ENCODE measurements at regions of chr9 and their contacts with region 1.

Region 1: GRCh38 chr9:99162759-99163364 is 57.9 kb downstream of the TGFBR1 start:
- DNase-seq: peak; percentile 69
- ATAC-seq: peak; percentile 59
- H3K4me3 ChIP-seq: no peak overlapping the region
- H3K4me3 Mint-ChIP-seq: peak overlapping the region; percentile 27
- H3K27ac ChIP-seq: no peak overlapping the region
- H3K27ac Mint-ChIP-seq: no peak overlapping the region
- H3K4me1 ChIP-seq: peaks cover 8 to 9% of the 10 kb centered on the region in 2 donors
- H3K4me1 Mint-ChIP-seq: peaks cover 37% of the 10 kb centered on the region
- H3K27me3 ChIP-seq: no peaks in the 10 kb centered on the region
- H3K27me3 Mint-ChIP-seq: no peaks in the 10 kb centered on the region
- CTCF ChIP-seq: peak; percentile 82

Region 2: DNA sequence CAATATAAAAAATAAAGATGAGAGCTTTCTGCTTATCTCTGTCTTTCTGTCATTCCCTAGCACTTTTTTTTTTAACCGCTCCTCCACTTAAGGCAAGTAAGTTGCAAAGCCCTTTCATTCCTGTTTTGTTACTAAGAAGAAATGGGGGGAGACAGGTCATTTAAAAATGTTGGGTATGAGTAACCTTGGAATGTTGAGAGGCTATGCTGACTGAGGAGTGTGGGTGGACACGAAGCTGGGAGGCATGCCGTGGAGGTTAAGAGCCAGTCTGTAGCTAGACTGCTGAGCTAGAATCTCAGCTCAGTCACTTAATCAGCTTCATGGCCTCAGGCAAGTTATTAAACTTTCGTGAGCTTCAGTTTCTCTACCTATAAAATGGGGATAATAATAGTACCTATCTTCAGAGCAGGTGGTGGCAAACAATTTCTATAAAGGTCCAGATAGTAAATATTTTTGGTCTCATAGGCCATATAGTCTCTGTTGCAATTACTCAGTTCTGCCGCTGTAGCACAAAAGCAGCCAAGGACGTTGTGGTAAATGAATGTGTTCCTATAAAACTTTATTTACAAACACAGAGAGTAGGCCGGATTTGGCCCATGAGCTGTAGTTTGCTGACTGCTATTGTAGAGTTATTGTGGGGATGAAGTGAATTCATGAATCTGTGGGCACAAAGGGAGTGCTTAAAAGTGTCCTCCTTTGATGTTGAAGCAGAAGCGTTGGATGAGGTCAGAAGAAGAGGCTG is 674.1 kb before region 1 on chr9:
- CTCF ChIA-PET with region 1: no interaction called
- POLR2A ChIA-PET with region 1: no interaction called
- intact Hi-C with region 1: no loop called
- DNase-seq: no peak
- ATAC-seq: no peak
- H3K4me3 ChIP-seq: no peak overlapping the region
- H3K4me3 Mint-ChIP-seq: no peak overlapping the region
- H3K27ac ChIP-seq: no peak overlapping the region
- H3K27ac Mint-ChIP-seq: no peak overlapping the region
- H3K4me1 ChIP-seq: no peaks in the 10 kb centered on the region
- H3K4me1 Mint-ChIP-seq: no peaks in the 10 kb centered on the region
- H3K27me3 ChIP-seq: peaks cover 0 to 11% (median 4%) of the 10 kb centered on the region in 4 experiments
- H3K27me3 Mint-ChIP-seq: peaks cover 30% of the 10 kb centered on the region
- CTCF ChIP-seq: no peak

Region 3: DNA sequence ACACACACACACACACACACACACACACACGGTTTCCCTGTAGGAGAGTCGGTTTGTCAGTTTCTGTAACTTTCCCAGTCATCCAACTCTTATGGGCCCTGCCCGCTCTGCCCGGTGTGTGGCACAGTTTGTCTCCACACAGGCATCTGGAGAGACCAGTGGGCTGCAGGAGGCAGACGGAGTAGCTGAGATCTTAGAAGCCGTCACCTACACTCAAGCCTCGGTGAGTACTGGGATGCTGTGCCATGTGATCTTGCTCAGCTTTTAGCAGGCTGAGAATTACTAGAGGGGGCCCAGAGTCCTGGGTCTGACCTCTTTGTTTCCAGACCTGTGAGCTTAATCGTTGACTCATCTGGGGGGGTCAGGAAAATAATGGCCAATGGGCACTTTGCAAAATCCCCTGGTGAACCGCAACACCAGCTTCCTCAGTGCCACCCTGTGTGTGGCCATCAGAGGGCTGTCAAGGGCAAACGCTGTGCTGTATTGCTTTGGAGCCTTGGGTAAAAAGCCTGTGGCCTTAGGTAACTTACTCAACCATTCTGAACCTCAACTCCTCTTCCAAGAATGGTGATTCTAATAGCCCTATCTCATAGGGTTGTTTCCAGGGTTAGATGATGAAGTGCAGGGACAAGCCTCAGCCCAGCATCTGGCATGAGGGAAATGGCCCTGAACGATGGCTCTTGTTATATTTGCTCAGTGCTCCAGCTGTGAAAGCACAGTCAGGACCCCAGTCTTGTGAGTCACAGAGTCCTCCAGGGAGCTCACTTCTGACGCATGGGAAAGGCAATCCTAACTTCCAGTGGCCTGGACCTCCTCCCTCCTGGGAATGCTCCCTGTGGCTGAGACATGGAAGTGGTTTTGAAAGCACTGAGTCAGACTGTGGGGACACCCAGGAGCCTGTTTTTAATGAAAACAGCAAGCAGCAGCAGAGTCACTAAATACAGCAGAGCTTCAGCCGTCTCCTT is 173.5 kb before region 1 on chr9:
- CTCF ChIA-PET with region 1: no interaction called
- POLR2A ChIA-PET with region 1: no interaction called
- intact Hi-C with region 1: no loop called
- DNase-seq: no peak
- ATAC-seq: no peak
- H3K4me3 ChIP-seq: no peak overlapping the region
- H3K4me3 Mint-ChIP-seq: no peak overlapping the region
- H3K27ac ChIP-seq: no peak overlapping the region
- H3K27ac Mint-ChIP-seq: no peak overlapping the region
- H3K4me1 ChIP-seq: peaks cover 14 to 17% of the 10 kb centered on the region in 2 donors
- H3K4me1 Mint-ChIP-seq: peaks cover 17% of the 10 kb centered on the region
- H3K27me3 ChIP-seq: no peaks in the 10 kb centered on the region
- H3K27me3 Mint-ChIP-seq: no peaks in the 10 kb centered on the region
- CTCF ChIP-seq: no peak

Region 4: DNA sequence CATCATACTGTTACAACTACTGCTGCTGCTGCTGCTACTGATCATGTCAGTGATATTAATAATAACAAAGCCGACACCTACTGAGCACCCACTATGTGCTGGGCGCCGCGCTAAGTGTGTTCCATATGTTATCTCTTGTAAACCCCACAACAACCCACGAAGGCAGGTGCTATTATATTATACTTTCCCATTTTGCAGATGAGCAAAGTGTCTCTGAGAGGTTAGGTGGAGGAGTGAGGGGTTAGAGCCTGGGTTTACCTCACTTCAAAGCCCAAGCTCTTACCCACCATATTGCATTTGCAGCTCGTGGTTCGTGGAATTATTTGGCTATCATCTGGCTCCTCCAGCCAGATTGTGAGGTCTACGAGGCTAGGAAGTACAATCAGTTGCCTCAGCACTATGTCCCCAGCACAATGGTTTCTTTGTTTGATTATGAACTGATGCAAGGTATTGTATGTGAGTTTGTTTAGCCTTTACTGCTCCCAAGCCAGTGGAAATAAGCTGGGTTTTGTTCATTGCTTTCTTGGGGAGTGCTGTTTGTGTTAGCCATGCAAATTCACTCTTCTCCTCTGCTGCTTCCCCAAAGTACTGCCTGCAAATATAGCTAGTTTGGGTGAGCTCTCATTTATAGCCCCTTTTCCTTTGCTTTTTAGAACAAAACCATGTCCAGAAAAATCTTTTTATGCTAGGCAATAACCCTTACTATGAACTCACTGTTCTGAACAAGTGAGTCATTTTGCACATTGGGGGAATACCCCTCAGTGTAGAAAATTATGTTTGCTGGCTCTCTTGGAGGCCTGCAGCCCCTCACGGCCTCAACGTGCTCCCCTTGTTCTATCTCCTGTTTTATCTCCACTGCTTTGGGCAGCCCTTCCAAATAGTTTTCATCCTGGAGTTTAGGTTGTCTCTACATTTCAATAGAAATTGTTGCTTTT is 11.0 kb after region 1 on chr9:
- CTCF ChIA-PET with region 1: interaction called, 41 read pairs
- POLR2A ChIA-PET with region 1: interaction called, 6 read pairs
- intact Hi-C with region 1: no loop called
- DNase-seq: no peak
- ATAC-seq: no peak
- H3K4me3 ChIP-seq: no peak overlapping the region
- H3K4me3 Mint-ChIP-seq: no peak overlapping the region
- H3K27ac ChIP-seq: no peak overlapping the region
- H3K27ac Mint-ChIP-seq: no peak overlapping the region
- H3K4me1 ChIP-seq: peaks cover 3 to 7% of the 10 kb centered on the region in 2 donors
- H3K4me1 Mint-ChIP-seq: peaks cover 29% of the 10 kb centered on the region
- H3K27me3 ChIP-seq: no peaks in the 10 kb centered on the region
- H3K27me3 Mint-ChIP-seq: no peaks in the 10 kb centered on the region
- CTCF ChIP-seq: no peak

Region 5: GRCh38 chr9:99221621-99222415 is 59.0 kb after region 1 on chr9 and contains the starts of genes ALG2 and SEC61B:
- CTCF ChIA-PET with region 1: interaction called, 18 read pairs
- POLR2A ChIA-PET with region 1: no interaction called
- intact Hi-C with region 1: loop called (anchors 10 kb)
- DNase-seq: peak; percentile 98
- ATAC-seq: peak; percentile 89
- H3K4me3 ChIP-seq: peak within 1 kb of the TSS; percentile 88 to 96 (median 90)
- H3K4me3 Mint-ChIP-seq: peak within 1 kb of the TSS; percentile 95
- H3K27ac ChIP-seq: peak within 1 kb of the TSS; percentile 98 to 99
- H3K27ac Mint-ChIP-seq: peak within 1 kb of the TSS; percentile 100
- H3K4me1 ChIP-seq: peaks cover 30 to 43% of the 10 kb centered on the region in 2 donors
- H3K4me1 Mint-ChIP-seq: peaks cover 77% of the 10 kb centered on the region
- H3K27me3 ChIP-seq: no peaks in the 10 kb centered on the region
- H3K27me3 Mint-ChIP-seq: no peaks in the 10 kb centered on the region
- CTCF ChIP-seq: no peak
- total RNA-seq, gene ALG2: 42.6 and 46.3 TPM in 2 replicates
- total RNA-seq, gene SEC61B: 70.2 and 78.2 TPM in 2 replicates

Region 6: GRCh38 chr9:100216178-100216787 is 1053.4 kb after region 1 on chr9:
- CTCF ChIA-PET with region 1: interaction called, 9 read pairs
- POLR2A ChIA-PET with region 1: no interaction called
- intact Hi-C with region 1: loop called (anchors 1 kb)
- DNase-seq: peak; percentile 81
- ATAC-seq: peak; percentile 85
- H3K4me3 ChIP-seq: no peak overlapping the region
- H3K4me3 Mint-ChIP-seq: no peak overlapping the region
- H3K27ac ChIP-seq: no peak overlapping the region
- H3K27ac Mint-ChIP-seq: no peak overlapping the region
- H3K4me1 ChIP-seq: no peaks in the 10 kb centered on the region
- H3K4me1 Mint-ChIP-seq: no peaks in the 10 kb centered on the region
- H3K27me3 ChIP-seq: no peaks in the 10 kb centered on the region
- H3K27me3 Mint-ChIP-seq: no peaks in the 10 kb centered on the region
- CTCF ChIP-seq: peak; percentile 79

Region 7: DNA sequence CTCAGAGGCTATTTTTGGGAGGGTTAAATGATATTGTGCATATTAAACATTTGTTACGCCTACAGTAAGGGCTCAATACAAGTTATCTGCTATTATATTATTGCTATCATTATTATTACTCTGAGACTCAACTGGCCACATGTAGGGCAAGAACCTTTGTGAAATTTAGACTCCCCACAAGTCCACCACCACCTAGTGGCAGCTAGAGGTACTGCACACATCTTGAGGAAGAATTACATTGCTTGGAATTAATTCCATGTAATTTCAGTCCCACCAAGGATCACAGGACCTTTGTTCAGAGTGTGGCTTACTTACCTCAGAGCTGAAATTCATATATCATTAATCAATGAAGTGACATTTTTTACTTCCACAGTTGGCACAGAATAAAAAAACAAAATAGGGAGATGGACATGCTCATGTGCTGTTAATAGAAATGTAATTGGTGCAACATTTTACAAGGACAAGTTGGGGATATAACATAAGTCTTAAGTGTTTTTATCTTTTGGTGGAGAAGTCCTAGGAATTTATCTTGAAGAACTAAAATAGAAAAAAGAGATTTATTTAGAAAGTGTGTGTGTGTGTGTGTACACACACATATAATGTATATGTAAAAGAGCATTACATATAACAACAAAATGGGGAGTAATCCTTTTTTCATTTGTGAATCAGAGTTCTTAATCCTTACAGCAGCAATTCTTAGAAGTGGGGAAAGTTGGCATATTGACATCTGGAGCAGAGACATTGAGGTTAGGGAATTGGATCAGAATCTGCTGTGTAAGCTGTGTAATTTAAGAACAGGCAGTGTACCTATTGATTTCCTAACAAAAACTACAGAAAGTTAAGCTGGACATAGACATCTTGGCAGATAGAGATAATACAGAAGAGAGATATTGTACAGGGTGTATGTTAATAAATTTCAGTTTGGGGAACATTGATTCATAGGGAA is 1275.3 kb after region 1 on chr9:
- CTCF ChIA-PET with region 1: interaction called, 3 read pairs
- POLR2A ChIA-PET with region 1: no interaction called
- intact Hi-C with region 1: loop called (anchors 10 kb)
- DNase-seq: peak; percentile 72
- ATAC-seq: peak; percentile 81
- H3K4me3 ChIP-seq: no peak overlapping the region
- H3K4me3 Mint-ChIP-seq: no peak overlapping the region
- H3K27ac ChIP-seq: no peak overlapping the region
- H3K27ac Mint-ChIP-seq: no peak overlapping the region
- H3K4me1 ChIP-seq: no peaks in the 10 kb centered on the region
- H3K4me1 Mint-ChIP-seq: no peaks in the 10 kb centered on the region
- H3K27me3 ChIP-seq: no peaks in the 10 kb centered on the region
- H3K27me3 Mint-ChIP-seq: no peaks in the 10 kb centered on the region
- CTCF ChIP-seq: peak; percentile 99